ENCODE measurements at regions of chr6 and their contacts with region 1.

Region 1: DNA sequence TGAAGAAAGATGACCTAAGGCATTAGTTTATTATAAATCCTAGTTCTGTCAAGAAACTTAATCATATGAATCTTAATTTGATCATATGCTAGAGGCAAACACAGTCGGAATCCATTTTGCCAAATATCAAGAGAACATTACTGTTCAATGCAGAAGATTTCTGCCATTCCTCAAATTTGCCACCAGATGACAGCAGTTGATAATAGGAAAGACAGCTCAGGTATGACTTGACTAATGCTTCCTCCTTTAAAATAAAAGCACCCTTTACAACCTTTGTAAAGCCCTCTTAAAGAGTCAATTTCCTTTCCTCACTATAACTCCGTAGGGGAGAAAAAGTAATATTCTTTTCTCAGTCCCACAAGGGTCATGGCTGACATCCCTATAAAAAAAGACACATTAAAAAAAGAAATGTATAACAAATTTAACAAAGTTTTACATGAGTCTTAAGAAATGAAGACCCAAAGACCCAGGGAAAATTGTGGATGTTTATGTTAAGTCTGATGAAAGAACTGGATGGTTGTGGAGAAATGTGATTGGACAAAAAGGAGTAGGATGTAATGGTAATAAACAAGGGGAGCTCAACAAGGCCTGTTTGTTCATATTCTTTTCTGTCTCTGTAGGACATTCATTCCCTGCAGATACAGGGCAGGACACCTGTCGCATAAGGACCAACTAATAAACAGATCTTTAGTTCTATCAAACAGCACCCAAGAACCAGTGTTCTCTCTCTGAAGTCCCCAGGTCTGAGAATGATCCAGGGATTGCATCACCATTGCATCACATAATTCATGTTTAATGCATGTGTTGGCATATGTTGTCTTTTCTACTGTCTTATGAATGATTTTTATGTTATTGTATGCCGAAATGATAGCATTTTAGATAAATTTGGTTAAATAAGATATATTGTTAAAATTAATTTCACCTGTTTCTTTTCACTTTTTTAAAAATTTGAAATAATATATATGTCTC is 23.0 kb upstream of the IL17A start:
- DNase-seq: peak; percentile 38
- CTCF ChIP-seq: peak; percentile 82

Region 2: DNA sequence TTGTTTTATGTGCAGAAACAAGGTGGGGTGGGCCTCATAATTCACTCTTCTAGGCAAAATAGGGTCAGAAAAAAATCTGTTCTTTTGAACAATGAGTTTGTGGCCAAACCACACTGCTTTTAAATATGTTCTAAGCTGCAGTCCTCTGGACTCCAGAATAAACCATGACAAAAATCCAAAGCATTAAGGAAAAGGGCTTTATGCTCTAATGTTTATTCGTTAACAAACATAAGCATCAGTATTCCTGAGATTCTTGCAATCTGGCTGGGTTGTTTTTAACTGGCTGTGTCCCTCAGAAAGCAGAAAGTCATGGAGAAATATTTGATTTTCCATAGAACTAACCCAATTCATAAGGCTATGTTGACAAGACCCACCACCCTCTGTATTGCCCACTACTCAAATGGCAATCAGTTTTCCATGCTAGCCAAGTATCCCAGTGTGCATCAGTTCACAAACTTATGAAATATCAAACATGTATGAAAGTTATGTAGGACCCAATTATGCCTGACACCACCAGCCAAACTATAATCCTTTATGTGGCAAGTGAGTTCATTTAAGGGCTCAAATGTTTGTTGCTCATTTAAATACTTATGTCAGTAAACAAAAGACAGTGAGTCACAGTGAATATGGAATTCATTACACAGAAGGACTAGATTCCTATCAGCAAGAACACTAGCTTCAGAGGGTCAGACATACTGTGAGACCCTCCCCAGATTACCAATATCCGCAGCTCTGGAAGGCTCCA is 120.9 kb before region 1 on chr6:
- in situ Hi-C with region 1: no loop called
- DNase-seq: no peak
- CTCF ChIP-seq: no peak

Region 3: GRCh38 chr6:52233975-52234823 is 71.0 kb after region 1 on chr6:
- in situ Hi-C with region 1: loop called (anchors 5 kb)
- DNase-seq: peak; percentile 49
- CTCF ChIP-seq: peak; percentile 90

Region 4: GRCh38 chr6:52263709-52264540 is 100.7 kb after region 1 on chr6:
- in situ Hi-C with region 1: loop called (anchors 10 kb)
- DNase-seq: peak; percentile 67
- CTCF ChIP-seq: peak; percentile 92

Region 5: DNA sequence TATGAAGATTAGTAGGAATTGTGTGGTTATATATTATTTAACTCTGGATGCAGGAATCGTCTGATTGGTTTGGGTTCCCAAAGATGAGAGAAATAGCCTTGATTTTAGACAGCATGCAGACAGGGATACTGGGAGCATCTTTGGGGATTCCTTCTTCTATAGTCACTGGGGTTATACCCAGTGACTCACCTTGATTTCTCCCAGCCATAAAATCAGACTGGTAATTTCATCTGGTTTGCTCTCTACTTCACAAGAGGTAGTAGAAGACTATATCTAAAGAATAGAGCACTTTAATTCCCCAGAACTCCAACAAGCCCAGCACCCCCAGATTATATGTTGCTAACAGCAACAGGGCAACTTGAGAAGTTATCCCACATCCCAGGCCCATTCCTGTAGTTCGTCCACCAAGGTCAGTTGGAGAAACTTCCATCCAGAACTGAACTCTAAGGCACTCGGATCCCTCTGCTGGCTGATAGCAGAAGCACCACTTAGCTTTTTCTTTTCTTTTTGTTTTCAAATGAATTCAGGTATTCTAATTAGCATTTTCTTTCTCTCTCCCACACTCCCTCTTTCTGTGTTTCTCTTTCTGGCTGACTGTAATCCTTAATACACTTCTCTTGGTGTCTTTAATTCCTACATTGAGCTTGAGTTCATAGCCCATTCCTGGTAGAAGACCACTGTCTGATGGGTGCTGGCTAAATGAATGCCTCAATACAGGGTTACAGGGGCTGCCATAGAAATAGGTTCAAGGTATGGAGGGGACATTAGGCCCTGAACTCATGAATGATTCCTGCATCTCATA is 236.5 kb after region 1 on chr6:
- in situ Hi-C with region 1: loop called (anchors 10 kb)
- DNase-seq: peak; percentile 50
- CTCF ChIP-seq: peak; percentile 85

Measured in GM13977 (cell line).